ENCODE measurements at regions of chr11 and their contacts with region 1.

Region 1: GRCh38 chr11:107307991-107308390 is 149.6 kb downstream of the CWF19L2 start:
- DNase-seq: no peak
- ATAC-seq: no peak
- H3K4me3 ChIP-seq: no peak overlapping the region
- H3K27ac ChIP-seq: no peak overlapping the region
- H3K4me1 ChIP-seq: no peaks in the 10 kb centered on the region
- H3K27me3 ChIP-seq: no peaks in the 10 kb centered on the region
- CTCF ChIP-seq: no peak

Region 2: GRCh38 chr11:107182988-107183387 is 125.0 kb before region 1 on chr11:
- intact Hi-C with region 1: no loop called
- DNase-seq: no peak
- ATAC-seq: no peak
- H3K4me3 ChIP-seq: no peak overlapping the region
- H3K27ac ChIP-seq: no peak overlapping the region
- H3K4me1 ChIP-seq: no peaks in the 10 kb centered on the region
- H3K27me3 ChIP-seq: no peaks in the 10 kb centered on the region
- CTCF ChIP-seq: no peak

Region 3: DNA sequence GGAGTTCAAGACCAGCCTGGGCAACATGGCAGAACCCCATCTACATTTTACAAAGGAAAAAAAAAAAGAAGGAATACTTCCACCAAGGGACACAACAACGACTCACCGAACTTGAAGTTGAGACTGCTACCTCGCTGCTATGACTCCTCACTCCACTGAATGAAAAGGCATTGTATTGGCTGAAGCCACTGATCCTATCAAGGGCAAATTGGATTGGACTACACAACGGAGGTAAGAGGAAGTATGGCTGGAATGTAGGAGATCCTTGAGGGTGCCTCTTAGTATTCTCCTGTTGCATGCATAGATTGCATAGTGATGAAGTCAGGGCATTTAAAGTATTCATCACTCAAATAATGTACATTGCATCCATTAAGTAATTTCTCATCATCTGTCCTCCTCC is 51.7 kb after region 1 on chr11:
- intact Hi-C with region 1: no loop called
- DNase-seq: no peak
- ATAC-seq: no peak
- H3K4me3 ChIP-seq: no peak overlapping the region
- H3K27ac ChIP-seq: no peak overlapping the region
- H3K4me1 ChIP-seq: no peaks in the 10 kb centered on the region
- H3K27me3 ChIP-seq: no peaks in the 10 kb centered on the region
- CTCF ChIP-seq: no peak

Region 4: DNA sequence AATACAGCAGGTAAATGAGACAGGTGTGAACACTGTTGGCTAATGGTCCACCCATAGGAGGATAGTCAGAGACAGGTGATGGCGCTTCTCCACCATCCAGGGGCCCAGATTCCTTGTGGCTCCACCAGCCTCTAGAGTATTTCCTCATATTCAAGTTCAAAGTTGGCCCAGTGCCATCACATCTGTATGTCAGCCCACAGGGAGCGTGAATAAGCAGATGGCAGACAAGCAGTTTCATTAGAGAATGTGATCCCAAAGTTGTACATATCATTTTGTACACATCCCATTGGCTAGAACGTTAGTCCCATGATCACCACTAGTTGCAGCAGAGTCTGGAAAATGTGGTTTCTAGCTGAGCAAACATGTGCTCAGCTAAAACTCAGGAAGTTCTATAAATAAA is 160.6 kb after region 1 on chr11:
- intact Hi-C with region 1: loop called in 1 of 10 experiments (anchors 5 kb)
- DNase-seq: no peak
- ATAC-seq: no peak
- H3K4me3 ChIP-seq: no peak overlapping the region
- H3K27ac ChIP-seq: no peak overlapping the region
- H3K4me1 ChIP-seq: no peaks in the 10 kb centered on the region
- H3K27me3 ChIP-seq: peaks cover 0 to 27% (median 21%) of the 10 kb centered on the region in 7 donors
- CTCF ChIP-seq: no peak

Region 5: GRCh38 chr11:107482234-107482633 is 174.2 kb after region 1 on chr11:
- intact Hi-C with region 1: no loop called
- DNase-seq: no peak
- ATAC-seq: no peak
- H3K4me3 ChIP-seq: no peak overlapping the region
- H3K27ac ChIP-seq: no peak overlapping the region
- H3K4me1 ChIP-seq: no peaks in the 10 kb centered on the region
- H3K27me3 ChIP-seq: peaks cover 0 to 16% (median 0%) of the 10 kb centered on the region in 7 donors
- CTCF ChIP-seq: no peak

Measured in heart right ventricle (tissue), 16 donors.